PC-9 (cell line): ENCODE measurements at regions of chr7 and their contacts with region 1.

Region 1: GRCh38 chr7:80815733-80816132 is 103.1 kb downstream of the SEMA3C start:
- DNase-seq: no peak
- H3K4me3 ChIP-seq: no peak overlapping the region
- H3K27ac ChIP-seq: 0 out of 2 replicates have a peak overlapping the region, but pooled peaks have one; percentile 4
- H3K4me1 ChIP-seq: no peaks in the 10 kb centered on the region
- H3K27me3 ChIP-seq: no peaks in the 10 kb centered on the region
- CTCF ChIP-seq: no peak

Region 2: GRCh38 chr7:80802527-80802926 is 13.2 kb before region 1 on chr7:
- CTCF ChIA-PET with region 1: no interaction called
- POLR2A ChIA-PET with region 1: interaction called, 28 read pairs
- intact Hi-C with region 1: no loop called
- DNase-seq: no peak
- H3K4me3 ChIP-seq: no peak overlapping the region
- H3K27ac ChIP-seq: no peak overlapping the region
- H3K4me1 ChIP-seq: no peaks in the 10 kb centered on the region
- H3K27me3 ChIP-seq: no peaks in the 10 kb centered on the region
- CTCF ChIP-seq: no peak

Region 3: DNA sequence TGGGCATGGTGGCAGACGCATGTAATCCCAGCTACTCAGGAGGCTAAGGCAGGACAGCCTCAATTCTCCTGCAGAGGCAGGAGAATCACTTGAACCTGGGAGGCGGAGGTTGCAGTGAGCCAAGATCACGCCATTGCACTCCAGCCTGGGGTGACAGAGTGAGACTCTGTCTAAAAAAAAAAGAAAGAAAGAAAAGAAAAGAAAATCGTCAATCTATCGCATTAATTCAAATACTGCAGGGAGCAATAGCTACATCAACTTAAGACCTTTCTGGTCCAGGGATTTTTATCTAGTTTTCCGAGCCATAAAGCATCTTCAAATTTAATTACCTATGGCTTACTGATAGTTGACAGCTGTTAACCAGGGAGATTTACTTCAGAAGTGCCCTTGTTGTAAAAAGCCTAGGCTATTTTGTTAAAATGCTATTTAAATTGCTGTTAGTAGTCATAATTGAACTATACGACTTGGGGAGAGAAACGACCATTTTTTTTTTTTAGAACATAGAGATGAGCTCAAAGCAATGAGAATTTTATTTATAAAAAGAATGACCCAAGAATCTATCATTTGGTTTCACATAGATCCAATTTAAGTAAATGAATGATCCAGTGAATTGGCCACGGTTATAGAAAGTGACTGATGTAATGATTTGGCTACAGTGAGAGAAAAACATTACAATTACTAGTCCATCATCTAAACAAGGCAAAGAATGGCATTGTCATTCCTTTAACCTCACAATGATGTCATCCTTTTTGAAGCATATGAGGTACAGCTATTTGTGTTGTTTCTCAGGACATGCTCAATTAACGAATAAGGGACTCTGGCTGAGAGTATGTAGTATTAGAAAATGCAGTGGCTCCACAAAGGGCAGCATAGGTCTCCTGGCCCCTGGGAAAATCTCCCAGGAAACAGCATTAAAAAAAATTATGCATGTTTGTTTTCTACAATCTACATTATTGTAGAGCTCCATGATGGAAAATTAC is 17.8 kb after region 1 on chr7:
- CTCF ChIA-PET with region 1: no interaction called
- POLR2A ChIA-PET with region 1: no interaction called
- intact Hi-C with region 1: no loop called
- DNase-seq: no peak
- H3K4me3 ChIP-seq: no peak overlapping the region
- H3K27ac ChIP-seq: no peak overlapping the region
- H3K4me1 ChIP-seq: no peaks in the 10 kb centered on the region
- H3K27me3 ChIP-seq: no peaks in the 10 kb centered on the region
- CTCF ChIP-seq: no peak